CD14-positive monocyte (primary cell): ENCODE measurements at regions of chr10 and their contacts with region 1.

Region 1: DNA sequence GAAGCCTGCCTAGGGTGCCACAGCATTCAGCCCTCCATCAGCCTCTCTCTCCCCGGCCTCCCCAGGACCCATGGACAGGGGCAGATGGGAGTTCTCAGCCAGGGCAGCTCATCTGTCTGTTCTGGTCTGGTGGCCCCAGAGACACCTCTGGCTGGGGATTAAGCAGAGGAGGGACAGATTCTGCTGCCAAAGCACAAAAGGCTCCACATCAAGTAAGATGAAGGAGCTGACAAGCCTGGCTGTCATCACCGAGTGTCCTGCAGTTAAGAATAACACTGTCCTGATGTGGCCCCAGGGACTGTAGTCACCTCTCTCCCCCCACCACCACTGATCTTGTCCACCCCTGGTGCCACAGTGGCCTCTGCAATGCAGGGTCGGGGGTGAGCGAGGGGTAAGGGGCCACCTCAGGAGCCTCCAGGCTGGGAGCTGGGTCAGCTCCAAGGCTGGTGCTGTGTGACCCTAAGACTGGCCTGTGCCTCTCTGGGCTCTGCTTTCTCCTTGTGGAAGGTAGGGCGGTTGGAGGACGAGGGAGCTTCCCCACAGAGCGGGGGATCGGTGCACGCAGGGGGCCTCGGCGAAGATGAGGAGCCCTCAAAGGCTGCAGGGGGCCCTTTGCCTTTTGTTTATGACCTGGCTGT is 18.7 kb downstream of the C10orf105 start:
- DNase-seq: no peak
- H3K4me3 ChIP-seq: peak overlapping the region in 1 of 3 experiments; percentile 43
- H3K4me3 Mint-ChIP-seq: peak overlapping the region in 1 of 2 donors; percentile 59
- H3K27ac ChIP-seq: peak overlapping the region; percentile 85 to 90
- H3K27ac Mint-ChIP-seq: peak overlapping the region; percentile 83 to 95 (median 91)
- H3K4me1 ChIP-seq: peaks cover 71 to 75% of the 10 kb centered on the region in 2 donors
- H3K4me1 Mint-ChIP-seq: peaks cover 74% of the 10 kb centered on the region
- H3K27me3 ChIP-seq: no peaks in the 10 kb centered on the region
- H3K27me3 Mint-ChIP-seq: peaks cover 0 to 1% (median 0%) of the 10 kb centered on the region in 3 donors
- CTCF ChIP-seq: no peak

Region 2: DNA sequence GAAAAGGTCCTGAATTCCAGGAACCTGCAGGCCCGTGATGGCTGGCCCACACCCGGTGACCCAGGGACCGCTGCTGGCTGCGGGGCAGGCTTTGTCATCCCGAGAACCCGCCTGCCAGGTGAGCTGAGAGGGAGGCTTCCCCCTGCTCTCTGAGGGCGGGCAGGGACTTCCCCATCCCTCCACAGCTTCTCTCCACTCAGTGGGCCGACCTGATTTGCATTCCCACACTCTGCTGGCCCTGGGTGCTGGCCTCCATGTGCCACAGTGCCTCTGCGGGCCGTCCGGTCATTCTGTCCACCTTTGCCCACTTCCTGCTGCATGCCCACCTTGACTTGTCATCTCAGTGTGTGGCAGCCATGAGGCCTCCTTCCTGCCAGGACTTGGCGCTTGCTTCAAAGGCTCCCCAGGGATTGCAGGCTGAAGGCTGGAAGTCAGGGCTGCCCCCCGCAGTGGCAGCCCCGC is 1187.0 kb before region 1 on chr10:
- intact Hi-C with region 1: no loop called
- DNase-seq: no peak
- H3K4me3 ChIP-seq: no peak overlapping the region
- H3K4me3 Mint-ChIP-seq: no peak overlapping the region
- H3K27ac ChIP-seq: no peak overlapping the region
- H3K27ac Mint-ChIP-seq: no peak overlapping the region
- H3K4me1 ChIP-seq: peaks cover 4 to 8% of the 10 kb centered on the region in 2 donors
- H3K4me1 Mint-ChIP-seq: peaks cover 7% of the 10 kb centered on the region
- H3K27me3 ChIP-seq: no peaks in the 10 kb centered on the region
- H3K27me3 Mint-ChIP-seq: peaks cover 0 to 9% (median 2%) of the 10 kb centered on the region in 3 donors
- CTCF ChIP-seq: no peak

Region 3: DNA sequence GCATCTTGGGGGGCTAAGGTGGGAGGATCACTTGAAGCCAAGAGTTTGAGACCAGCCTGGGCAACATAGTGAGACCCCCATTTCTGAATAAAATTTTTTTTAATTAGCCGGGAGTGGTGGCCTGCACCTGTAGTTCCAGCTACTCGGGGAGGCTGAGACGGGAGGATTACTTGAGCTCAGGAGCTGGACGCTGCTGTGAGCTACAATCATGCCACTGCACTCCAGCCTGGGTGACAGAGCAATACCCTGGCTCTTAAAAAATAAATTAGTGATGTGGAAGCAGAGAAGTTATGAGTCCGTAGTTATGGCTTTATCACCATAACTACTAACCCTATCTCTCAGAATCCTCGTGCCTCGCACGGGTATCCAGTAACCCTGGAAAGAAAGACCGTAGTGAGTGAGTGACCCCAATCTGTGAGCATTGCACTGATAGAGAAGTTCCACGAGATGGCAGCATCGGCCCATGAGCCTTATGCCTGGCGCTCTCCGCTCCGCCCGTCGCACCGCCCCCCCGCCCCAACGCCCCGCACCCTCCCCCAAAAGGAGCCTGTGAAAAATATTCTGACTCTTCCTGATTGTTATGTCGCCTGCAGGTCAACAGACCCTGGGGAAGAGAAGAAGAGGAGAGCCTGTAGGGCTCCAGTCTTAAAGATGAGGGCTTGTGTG is 386.7 kb before region 1 on chr10:
- intact Hi-C with region 1: loop called in 1 of 2 experiments (anchors 5 kb)
- DNase-seq: peak; percentile 42 to 64 (median 62)
- H3K4me3 ChIP-seq: peak overlapping the region in 1 of 3 experiments; percentile 22
- H3K4me3 Mint-ChIP-seq: no peak overlapping the region
- H3K27ac ChIP-seq: no peak overlapping the region
- H3K27ac Mint-ChIP-seq: peak overlapping the region in 1 of 7 donors; percentile 46
- H3K4me1 ChIP-seq: peaks cover 37 to 40% of the 10 kb centered on the region in 2 donors
- H3K4me1 Mint-ChIP-seq: peaks cover 47% of the 10 kb centered on the region
- H3K27me3 ChIP-seq: no peaks in the 10 kb centered on the region
- H3K27me3 Mint-ChIP-seq: peaks cover 0 to 10% (median 3%) of the 10 kb centered on the region in 3 donors
- CTCF ChIP-seq: peak; percentile 91

Region 4: GRCh38 chr10:71775303-71775702 is 74.5 kb after region 1 on chr10:
- intact Hi-C with region 1: no loop called
- DNase-seq: peak; percentile 89 to 96 (median 93)
- H3K4me3 ChIP-seq: peak overlapping the region; percentile 93 to 99 (median 98)
- H3K4me3 Mint-ChIP-seq: peak overlapping the region; percentile 97 to 99
- H3K27ac ChIP-seq: peak overlapping the region; percentile 88 to 92
- H3K27ac Mint-ChIP-seq: peak overlapping the region; percentile 94 to 97 (median 96)
- H3K4me1 ChIP-seq: peaks cover 65 to 86% of the 10 kb centered on the region in 2 donors
- H3K4me1 Mint-ChIP-seq: peaks cover 81% of the 10 kb centered on the region
- H3K27me3 ChIP-seq: no peaks in the 10 kb centered on the region
- H3K27me3 Mint-ChIP-seq: peaks cover 0 to 6% (median 2%) of the 10 kb centered on the region in 3 donors
- CTCF ChIP-seq: no peak